ENCODE measurements at regions of chrX and their contacts with region 1.

Region 1: DNA sequence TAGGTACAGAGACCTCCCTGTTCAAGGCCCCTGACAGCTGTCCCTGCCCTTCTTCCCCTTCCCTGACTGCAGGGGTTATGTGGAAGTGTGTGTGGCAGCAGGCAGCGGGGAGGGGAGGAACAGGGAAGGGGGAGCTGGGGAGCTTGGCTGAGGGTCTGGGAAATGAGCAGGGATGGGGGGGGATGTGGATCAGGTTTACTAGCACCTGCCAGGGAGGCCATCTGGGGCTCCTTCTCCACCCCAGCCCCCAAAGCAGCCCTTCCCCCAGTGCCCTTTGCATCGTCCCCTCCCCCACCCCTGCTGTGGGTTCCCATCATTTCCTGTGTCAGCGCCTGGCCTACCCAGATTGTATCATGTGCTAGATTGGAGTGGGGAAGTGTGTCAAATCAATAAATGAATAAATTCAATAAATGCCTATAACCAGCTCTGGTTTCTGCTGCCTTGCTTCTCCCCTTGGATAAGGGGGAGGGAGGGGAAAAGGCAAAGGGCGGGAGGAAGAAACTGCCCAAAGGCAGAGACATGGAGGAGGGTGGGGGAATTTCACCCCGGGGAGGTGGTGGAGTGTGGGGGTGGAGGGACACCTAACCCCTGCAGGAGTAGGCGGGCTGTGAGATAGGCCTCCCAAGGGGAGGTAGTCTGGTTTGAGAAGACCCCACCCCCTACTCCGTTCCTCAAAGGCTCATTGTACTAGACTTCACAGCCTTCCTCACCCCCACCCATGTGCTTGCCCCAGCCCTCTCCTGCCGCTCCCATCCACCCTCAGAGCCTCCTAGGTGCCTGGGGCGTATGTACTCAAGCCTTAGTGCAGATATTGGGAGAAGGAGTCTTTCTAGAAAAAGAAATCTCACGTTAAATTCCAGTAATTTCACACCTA is 3.2 kb downstream of the CXorf65 start:
- DNase-seq: no peak
- H3K4me3 ChIP-seq: peak overlapping the region in 1 of 3 experiments; percentile 52
- H3K4me3 Mint-ChIP-seq: peak overlapping the region; percentile 62 to 75
- H3K27ac ChIP-seq: peak overlapping the region; percentile 17 to 37
- H3K27ac Mint-ChIP-seq: peak overlapping the region in 6 of 7 donors; percentile 16 to 89 (median 78)
- H3K4me1 ChIP-seq: peaks cover 49 to 52% of the 10 kb centered on the region in 2 donors
- H3K4me1 Mint-ChIP-seq: peaks cover 55% of the 10 kb centered on the region
- H3K27me3 ChIP-seq: no peaks in the 10 kb centered on the region
- H3K27me3 Mint-ChIP-seq: peaks cover 0 to 10% (median 0%) of the 10 kb centered on the region in 3 donors
- CTCF ChIP-seq: no peak

Region 2: GRCh38 chrX:71118032-71118984 is 15.0 kb after region 1 on chrX and contains the start of gene MED12:
- intact Hi-C with region 1: loop called in 1 of 2 experiments (anchors 2 kb)
- DNase-seq: peak; percentile 48 to 65 (median 56)
- H3K4me3 ChIP-seq: peak within 1 kb of the TSS; percentile 81 to 89 (median 86)
- H3K4me3 Mint-ChIP-seq: peak within 1 kb of the TSS; percentile 79 to 86
- H3K27ac ChIP-seq: peak within 1 kb of the TSS; percentile 79 to 86
- H3K27ac Mint-ChIP-seq: peak within 1 kb of the TSS; percentile 75 to 96 (median 89)
- H3K4me1 ChIP-seq: peaks cover 18 to 19% of the 10 kb centered on the region in 2 donors
- H3K4me1 Mint-ChIP-seq: peaks cover 14% of the 10 kb centered on the region
- H3K27me3 ChIP-seq: no peaks in the 10 kb centered on the region
- H3K27me3 Mint-ChIP-seq: peaks cover 0 to 4% (median 0%) of the 10 kb centered on the region in 3 donors
- CTCF ChIP-seq: no peak
- polyA plus RNA-seq, gene MED12: 2.4 to 17.8 (median 5.0) TPM

Region 3: GRCh38 chrX:71216485-71216884 is 113.1 kb after region 1 on chrX:
- intact Hi-C with region 1: no loop called
- DNase-seq: no peak
- H3K4me3 ChIP-seq: no peak overlapping the region
- H3K4me3 Mint-ChIP-seq: no peak overlapping the region
- H3K27ac ChIP-seq: no peak overlapping the region
- H3K27ac Mint-ChIP-seq: no peak overlapping the region
- H3K4me1 ChIP-seq: no peaks in the 10 kb centered on the region
- H3K4me1 Mint-ChIP-seq: no peaks in the 10 kb centered on the region
- H3K27me3 ChIP-seq: no peaks in the 10 kb centered on the region
- H3K27me3 Mint-ChIP-seq: peaks cover 0 to 8% (median 7%) of the 10 kb centered on the region in 3 donors
- CTCF ChIP-seq: no peak

Region 4: DNA sequence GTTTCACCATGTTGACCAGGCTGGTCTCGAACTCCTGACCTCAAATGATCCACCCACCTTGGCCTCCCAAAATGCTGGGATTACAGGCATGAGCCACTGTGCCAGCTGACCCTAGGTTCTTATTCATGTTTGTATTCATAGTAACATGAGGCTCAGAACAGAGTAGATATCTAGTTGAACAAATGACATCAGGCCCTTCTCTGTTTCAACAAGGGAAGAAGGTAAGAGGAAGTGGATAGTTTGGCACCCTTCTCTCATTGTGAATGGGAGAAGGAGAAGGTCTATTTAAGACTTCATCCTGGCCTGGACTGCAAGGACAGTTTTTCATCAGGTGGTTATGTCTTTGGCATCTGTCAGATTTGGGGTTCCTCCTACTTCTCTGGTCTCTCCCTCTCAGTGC is 133.5 kb after region 1 on chrX:
- intact Hi-C with region 1: no loop called
- DNase-seq: no peak
- H3K4me3 ChIP-seq: no peak overlapping the region
- H3K4me3 Mint-ChIP-seq: no peak overlapping the region
- H3K27ac ChIP-seq: no peak overlapping the region
- H3K27ac Mint-ChIP-seq: peak overlapping the region in 1 of 7 donors; percentile 1
- H3K4me1 ChIP-seq: peaks cover 6 to 7% of the 10 kb centered on the region in 2 donors
- H3K4me1 Mint-ChIP-seq: peaks cover 16% of the 10 kb centered on the region
- H3K27me3 ChIP-seq: no peaks in the 10 kb centered on the region
- H3K27me3 Mint-ChIP-seq: peaks cover 0 to 2% (median 0%) of the 10 kb centered on the region in 3 donors
- CTCF ChIP-seq: no peak

Region 5: GRCh38 chrX:71269801-71270395 is 166.6 kb after region 1 on chrX:
- intact Hi-C with region 1: no loop called
- DNase-seq: no peak
- H3K4me3 ChIP-seq: no peak overlapping the region
- H3K4me3 Mint-ChIP-seq: no peak overlapping the region
- H3K27ac ChIP-seq: no peak overlapping the region
- H3K27ac Mint-ChIP-seq: no peak overlapping the region
- H3K4me1 ChIP-seq: no peaks in the 10 kb centered on the region
- H3K4me1 Mint-ChIP-seq: no peaks in the 10 kb centered on the region
- H3K27me3 ChIP-seq: no peaks in the 10 kb centered on the region
- H3K27me3 Mint-ChIP-seq: peaks cover 0 to 3% (median 2%) of the 10 kb centered on the region in 3 donors
- CTCF ChIP-seq: no peak